WTC11 (cell line): ENCODE measurements at regions of chr1 and their contacts with region 1.

Region 1: DNA sequence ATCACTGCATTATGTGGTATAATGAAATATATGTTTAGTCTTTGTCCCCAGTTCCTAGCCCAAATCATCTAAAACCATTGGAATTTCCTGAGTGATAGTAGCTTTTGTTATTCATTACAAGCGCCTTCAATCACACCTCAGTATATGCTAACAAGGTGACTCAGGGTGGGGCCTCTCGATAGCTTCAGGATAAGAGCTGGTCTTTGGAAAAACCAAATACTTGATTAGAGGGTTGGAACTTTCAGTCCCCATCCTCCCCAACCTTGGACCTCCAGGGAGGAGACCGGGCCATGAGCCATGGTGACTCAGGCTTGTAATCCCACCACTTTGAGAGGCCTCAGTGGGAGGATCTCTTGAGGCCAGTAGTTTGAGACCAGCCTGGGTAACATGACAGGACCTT is 5.1 kb upstream of the BRDT start:
- DNase-seq: peak; percentile 15
- ATAC-seq: peak; percentile 87
- H3K4me3 Mint-ChIP-seq: no peak overlapping the region
- H3K27ac Mint-ChIP-seq: no peak overlapping the region
- H3K4me1 Mint-ChIP-seq: peaks cover 11% of the 10 kb centered on the region
- H3K27me3 Mint-ChIP-seq: no peaks in the 10 kb centered on the region
- CTCF ChIP-seq: no peak

Region 2: GRCh38 chr1:91885716-91886506 is 58.2 kb before region 1 on chr1 and contains the start of gene TGFBR3:
- CTCF ChIA-PET with region 1: no interaction called
- POLR2A ChIA-PET with region 1: interaction called, 10 read pairs
- DNase-seq: peak; percentile 74
- ATAC-seq: peak; percentile 76
- H3K4me3 Mint-ChIP-seq: peak within 1 kb of the TSS; percentile 90
- H3K27ac Mint-ChIP-seq: no peak within 1 kb of the TSS
- H3K4me1 Mint-ChIP-seq: peaks cover 9% of the 10 kb centered on the region
- H3K27me3 Mint-ChIP-seq: peaks cover 43% of the 10 kb centered on the region
- CTCF ChIP-seq: no peak
- total RNA-seq, gene TGFBR3: 3.7 to 4.2 TPM (median 3.7 TPM) in 3 replicates